Activated T-helper 1 cell treated with anti-CD3 and anti-CD28 coated beads, Interleukin-12 subunit alpha, Interleukin-12 subunit beta, Interleukin-2, Interleukin-4 antibody, amounts not matched to agents 30 ng/mL and 10 ng/mL and 1 ng/mL, durations not matched to agents 14 hours and 24 hours and 36 hours (primary cell): ENCODE measurements at regions of chr3 and their contacts with region 1.

Region 1: DNA sequence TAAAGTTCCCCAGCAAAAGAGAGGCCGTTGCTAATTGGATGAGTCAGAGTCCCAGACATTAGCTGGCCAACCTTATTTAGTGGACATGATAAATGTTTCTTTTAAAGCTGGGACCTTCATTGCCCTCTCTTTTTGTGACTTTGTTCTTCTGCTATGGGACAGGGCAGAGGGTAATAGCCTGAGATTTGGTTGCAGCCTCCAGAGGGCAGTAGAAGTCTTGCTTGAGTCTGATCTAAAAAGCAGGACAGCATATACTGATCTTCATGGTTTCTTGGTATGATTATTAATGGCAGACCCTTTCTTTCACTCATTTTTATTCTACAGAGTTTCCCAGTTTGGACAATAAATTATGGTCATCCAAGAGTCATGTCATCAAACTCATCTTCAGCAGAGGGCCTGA is 25.1 kb upstream of the ZKSCAN7 start:
- DNase-seq: no peak
- H3K4me3 Mint-ChIP-seq: no peak overlapping the region
- H3K27ac Mint-ChIP-seq: no peak overlapping the region
- H3K4me1 Mint-ChIP-seq: peaks cover 4% of the 10 kb centered on the region
- H3K27me3 Mint-ChIP-seq: peaks cover 10% of the 10 kb centered on the region

Region 2: DNA sequence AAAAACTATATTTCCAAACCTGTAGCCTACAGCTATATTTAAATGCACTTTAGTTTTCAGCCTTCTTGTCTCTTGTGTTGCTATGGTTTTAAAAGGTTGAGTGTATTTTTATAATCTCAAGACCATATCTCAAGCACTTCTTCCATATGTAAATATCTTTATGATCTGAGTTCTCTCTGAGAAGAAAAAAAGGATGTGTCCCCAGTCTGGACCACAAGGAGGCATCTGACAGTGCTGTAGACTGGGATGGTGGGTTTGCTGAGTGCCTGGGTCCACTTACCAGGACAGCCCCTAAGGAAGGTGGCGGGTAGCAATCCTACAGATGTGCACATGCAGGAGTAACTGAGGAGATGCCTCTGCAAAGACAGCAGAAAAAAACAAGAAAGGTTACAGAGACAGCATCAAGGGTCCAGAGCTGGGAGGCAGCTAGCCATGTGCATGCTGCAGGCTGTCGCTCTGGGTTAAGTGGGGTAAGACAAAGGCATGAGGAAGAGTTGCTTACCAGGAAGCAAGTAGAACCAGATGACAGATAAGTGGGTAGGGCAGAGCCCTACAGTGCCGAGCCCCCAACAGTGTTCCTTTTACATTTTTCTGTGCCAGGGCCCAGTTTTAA is 1314.2 kb before region 1 on chr3:
- intact Hi-C with region 1: no loop called
- DNase-seq: no peak
- H3K4me3 Mint-ChIP-seq: no peak overlapping the region
- H3K27ac Mint-ChIP-seq: no peak overlapping the region
- H3K4me1 Mint-ChIP-seq: peaks cover 16% of the 10 kb centered on the region
- H3K27me3 Mint-ChIP-seq: peaks cover 5% of the 10 kb centered on the region

Region 3: GRCh38 chr3:44323341-44323955 is 206.5 kb before region 1 on chr3:
- intact Hi-C with region 1: loop called (anchors 5 kb)
- DNase-seq: peak; percentile 22
- H3K4me3 Mint-ChIP-seq: no peak overlapping the region
- H3K27ac Mint-ChIP-seq: no peak overlapping the region
- H3K4me1 Mint-ChIP-seq: no peaks in the 10 kb centered on the region
- H3K27me3 Mint-ChIP-seq: peaks cover 23% of the 10 kb centered on the region

Region 4: GRCh38 chr3:44554626-44555592 is 25.0 kb after region 1 on chr3 and contains the start of gene ZKSCAN7:
- intact Hi-C with region 1: loop called (anchors 2 kb)
- DNase-seq: peak; percentile 9
- H3K4me3 Mint-ChIP-seq: peak within 1 kb of the TSS; percentile 89
- H3K27ac Mint-ChIP-seq: peak within 1 kb of the TSS; percentile 65
- H3K4me1 Mint-ChIP-seq: peaks cover 12% of the 10 kb centered on the region
- H3K27me3 Mint-ChIP-seq: no peaks in the 10 kb centered on the region
- total RNA-seq, gene ZKSCAN7: 0.73 and 0.80 TPM in 2 replicates

Region 5: DNA sequence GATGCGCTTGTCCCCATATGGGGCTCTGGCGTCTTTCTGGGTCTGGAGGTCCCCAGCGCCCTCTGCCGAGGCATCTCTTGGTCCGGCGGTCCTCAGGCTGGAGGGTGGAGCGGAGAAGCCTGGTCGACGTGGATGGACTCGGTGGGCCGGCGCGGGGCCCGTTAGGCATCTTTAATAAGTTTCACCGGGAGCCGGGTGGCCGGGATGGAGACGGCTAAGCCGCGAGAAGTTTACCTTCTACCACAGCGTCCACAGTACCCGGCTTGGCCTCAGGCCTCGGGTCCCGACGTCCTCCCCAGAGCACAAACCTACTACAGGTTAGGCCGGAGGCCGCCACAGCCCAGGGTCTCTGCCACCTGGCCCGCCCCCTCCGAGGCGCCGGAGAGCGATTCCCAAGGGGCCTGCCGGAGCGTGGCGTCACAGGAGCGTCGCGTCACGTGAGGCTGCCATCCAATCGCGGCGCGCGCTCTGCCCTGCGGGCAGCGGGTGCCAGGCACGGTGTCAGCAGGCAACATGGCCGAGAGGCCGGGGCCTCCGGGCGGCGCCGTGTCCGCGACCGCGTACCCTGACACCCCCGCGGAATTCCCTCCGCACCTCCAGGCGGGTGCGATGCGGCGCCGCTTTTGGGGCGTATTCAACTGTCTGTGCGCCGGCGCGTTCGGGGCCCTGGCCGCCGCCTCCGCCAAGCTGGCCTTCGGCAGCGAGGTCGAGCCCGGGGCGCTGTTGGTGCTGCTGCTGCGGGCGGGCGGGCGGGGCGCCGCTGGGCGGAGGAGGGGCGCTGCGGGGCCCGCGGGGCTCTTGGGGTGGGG is 331.7 kb after region 1 on chr3 and contains the start of gene TMEM42:
- intact Hi-C with region 1: loop called (anchors 1 kb)
- DNase-seq: peak; percentile 87
- H3K4me3 Mint-ChIP-seq: peak within 1 kb of the TSS; percentile 90
- H3K27ac Mint-ChIP-seq: peak within 1 kb of the TSS; percentile 90
- H3K4me1 Mint-ChIP-seq: peaks cover 33% of the 10 kb centered on the region
- H3K27me3 Mint-ChIP-seq: no peaks in the 10 kb centered on the region
- total RNA-seq, gene TMEM42: 8.6 and 10.0 TPM in 2 replicates

Region 6: GRCh38 chr3:44976002-44976815 is 446.3 kb after region 1 on chr3 and contains the starts of genes EXOSC7 and ZDHHC3:
- intact Hi-C with region 1: loop called (anchors 1 kb)
- DNase-seq: peak; percentile 81
- H3K4me3 Mint-ChIP-seq: peak within 1 kb of the TSS; percentile 99
- H3K27ac Mint-ChIP-seq: peak within 1 kb of the TSS; percentile 96
- H3K4me1 Mint-ChIP-seq: peaks cover 58% of the 10 kb centered on the region
- H3K27me3 Mint-ChIP-seq: no peaks in the 10 kb centered on the region
- total RNA-seq, gene EXOSC7: 93.6 and 94.4 TPM in 2 replicates
- total RNA-seq, gene ZDHHC3: 46.6 and 47.5 TPM in 2 replicates